ENCODE measurements at regions of chr9 and their contacts with region 1.

Region 1: GRCh38 chr9:109520478-109521132 is 22.5 kb upstream of the PTPN3 start:
- DNase-seq: peak; percentile 76 to 77
- H3K4me3 ChIP-seq: no peak overlapping the region
- H3K27ac ChIP-seq: no peak overlapping the region
- H3K4me1 ChIP-seq: peaks cover 6 to 12% of the 10 kb centered on the region in 2 donors
- H3K27me3 ChIP-seq: no peaks in the 10 kb centered on the region
- CTCF ChIP-seq: peak; percentile 84 to 96 (median 92)
- POLR2A ChIP-seq: no peak

Region 2: GRCh38 chr9:109440797-109441287 is 79.8 kb before region 1 on chr9:
- intact Hi-C with region 1: loop called (anchors 2 kb)
- DNase-seq: peak; percentile 34 to 51
- H3K4me3 ChIP-seq: no peak overlapping the region
- H3K27ac ChIP-seq: no peak overlapping the region
- H3K4me1 ChIP-seq: peaks cover 11 to 12% of the 10 kb centered on the region in 2 donors
- H3K27me3 ChIP-seq: no peaks in the 10 kb centered on the region
- CTCF ChIP-seq: peak; percentile 39 to 81 (median 74)
- POLR2A ChIP-seq: no peak

Measured in thyroid gland (tissue), 4 donors.